Right ventricle myocardium inferior (tissue), 1 donor: ENCODE measurements at regions of chr15 and their contacts with region 1.

Region 1: DNA sequence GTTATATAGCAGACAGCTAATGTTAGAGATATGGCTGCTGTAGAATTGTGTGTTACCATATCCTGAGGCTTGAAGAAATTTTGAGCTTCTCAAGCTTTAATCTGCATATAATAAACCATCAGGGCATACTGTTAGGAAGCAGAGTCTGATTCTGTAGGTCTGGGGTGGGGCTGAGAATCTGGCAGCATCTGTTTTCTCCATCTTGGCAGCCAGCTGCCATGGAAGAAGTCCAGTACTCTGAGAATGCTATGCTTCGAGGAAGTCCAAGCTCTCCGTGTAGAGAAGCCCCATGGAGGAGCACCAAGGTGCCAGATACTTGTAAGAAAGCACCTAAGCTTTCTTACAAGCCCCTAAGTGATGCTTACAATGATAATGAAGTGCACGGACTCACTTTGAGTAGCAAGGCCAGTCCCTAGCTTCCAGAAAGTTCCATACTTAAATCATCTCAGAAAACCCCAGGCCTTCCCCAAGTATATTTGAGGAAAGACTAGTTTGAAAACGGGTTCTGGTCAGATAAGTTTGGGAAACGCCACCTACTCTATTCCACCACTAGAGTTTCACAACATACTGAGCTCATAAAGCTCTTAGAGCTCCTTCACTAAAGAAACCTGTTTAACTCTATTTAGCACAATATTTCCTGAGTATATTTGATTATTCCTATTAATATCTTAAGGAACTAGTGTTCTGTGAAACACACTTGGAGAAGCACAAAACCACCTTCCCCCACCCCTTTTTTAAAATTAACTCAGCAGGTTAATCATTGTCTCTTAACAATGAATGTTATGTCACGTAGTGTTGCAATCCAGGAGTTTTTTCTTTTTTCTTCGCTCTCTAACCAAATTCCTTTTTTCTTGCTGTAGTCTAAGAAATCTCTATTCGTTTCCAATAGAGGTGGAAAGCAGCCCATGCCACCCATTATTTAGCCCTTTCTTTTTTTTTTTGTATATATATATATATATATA is 59.9 kb upstream of the RASGRP1 start:
- DNase-seq: no peak
- ATAC-seq: no peak

Region 2: GRCh38 chr15:38563723-38564519 is 60.6 kb before region 1 on chr15:
- intact Hi-C with region 1: loop called (anchors 5 kb)
- DNase-seq: peak; percentile 87
- ATAC-seq: peak; percentile 85

Region 3: GRCh38 chr15:38642689-38643270 is 18.3 kb after region 1 on chr15:
- intact Hi-C with region 1: no loop called
- DNase-seq: no peak
- ATAC-seq: no peak

Region 4: GRCh38 chr15:38683382-38684242 is 59.1 kb after region 1 on chr15:
- intact Hi-C with region 1: no loop called
- DNase-seq: no peak
- ATAC-seq: peak; percentile 54

Region 5: DNA sequence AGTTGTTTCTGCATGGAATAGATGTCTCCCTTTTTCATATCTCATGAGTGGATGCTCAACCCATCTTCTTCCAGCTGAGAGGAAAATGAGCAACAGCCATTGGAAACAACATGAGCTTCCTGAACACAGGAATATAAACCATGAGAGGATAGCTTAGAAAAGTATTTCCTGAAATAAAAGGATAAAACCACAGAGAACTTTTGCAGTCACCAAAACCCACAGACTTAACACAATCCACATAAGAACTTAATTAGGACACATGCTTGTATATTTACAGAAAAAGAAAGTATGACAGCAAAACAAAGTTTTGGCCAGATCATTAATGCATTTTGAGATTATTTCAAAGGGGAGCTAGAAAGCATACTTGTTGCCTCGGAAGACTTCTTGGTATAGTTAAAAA is 120.6 kb after region 1 on chr15:
- intact Hi-C with region 1: no loop called
- DNase-seq: no peak
- ATAC-seq: no peak